ENCODE measurements at regions of chr18 and their contacts with region 1.

Region 1: DNA sequence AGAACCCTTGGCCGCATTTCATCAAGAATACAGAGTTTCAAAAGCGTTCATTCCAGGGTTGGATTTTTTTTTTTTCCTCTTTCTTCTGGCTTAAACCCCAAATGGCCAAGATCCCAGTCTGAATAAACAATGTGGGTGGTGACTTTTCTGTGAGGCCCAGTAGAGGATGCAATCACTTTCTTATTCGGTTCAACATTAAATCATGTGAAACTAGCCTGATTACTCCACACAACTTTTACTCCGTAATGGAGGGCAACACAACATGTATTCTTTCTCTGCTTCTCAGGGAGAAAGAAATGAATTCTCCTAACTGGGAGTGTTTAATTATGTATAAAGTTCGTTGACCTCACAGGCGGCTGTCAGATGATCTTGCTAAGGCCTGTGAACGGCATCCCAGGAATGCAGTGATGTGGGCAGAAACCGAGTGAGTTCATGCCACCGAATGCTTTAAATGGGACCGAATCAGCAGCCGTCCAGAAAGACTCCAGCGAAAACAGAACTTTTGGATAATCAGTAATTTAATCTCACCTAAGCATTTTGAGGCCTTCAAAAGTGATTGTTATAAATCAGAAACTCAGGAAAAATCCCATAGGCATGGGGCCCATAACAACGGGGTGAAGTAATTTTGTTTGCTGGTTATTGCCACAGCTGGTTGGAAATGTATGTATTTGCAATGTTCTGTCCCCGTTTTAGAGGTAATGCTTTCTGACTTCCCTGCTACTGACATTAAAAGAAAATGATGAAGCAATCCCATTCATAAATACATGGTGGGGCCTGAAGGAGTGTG is 81.5 kb downstream of the BCL2 start:
- DNase-seq: no peak
- ATAC-seq: no peak
- H3K4me3 Mint-ChIP-seq: no peak overlapping the region
- H3K27ac Mint-ChIP-seq: peak overlapping the region; percentile 53
- H3K4me1 Mint-ChIP-seq: peaks cover 71% of the 10 kb centered on the region
- H3K27me3 Mint-ChIP-seq: no peaks in the 10 kb centered on the region

Region 2: DNA sequence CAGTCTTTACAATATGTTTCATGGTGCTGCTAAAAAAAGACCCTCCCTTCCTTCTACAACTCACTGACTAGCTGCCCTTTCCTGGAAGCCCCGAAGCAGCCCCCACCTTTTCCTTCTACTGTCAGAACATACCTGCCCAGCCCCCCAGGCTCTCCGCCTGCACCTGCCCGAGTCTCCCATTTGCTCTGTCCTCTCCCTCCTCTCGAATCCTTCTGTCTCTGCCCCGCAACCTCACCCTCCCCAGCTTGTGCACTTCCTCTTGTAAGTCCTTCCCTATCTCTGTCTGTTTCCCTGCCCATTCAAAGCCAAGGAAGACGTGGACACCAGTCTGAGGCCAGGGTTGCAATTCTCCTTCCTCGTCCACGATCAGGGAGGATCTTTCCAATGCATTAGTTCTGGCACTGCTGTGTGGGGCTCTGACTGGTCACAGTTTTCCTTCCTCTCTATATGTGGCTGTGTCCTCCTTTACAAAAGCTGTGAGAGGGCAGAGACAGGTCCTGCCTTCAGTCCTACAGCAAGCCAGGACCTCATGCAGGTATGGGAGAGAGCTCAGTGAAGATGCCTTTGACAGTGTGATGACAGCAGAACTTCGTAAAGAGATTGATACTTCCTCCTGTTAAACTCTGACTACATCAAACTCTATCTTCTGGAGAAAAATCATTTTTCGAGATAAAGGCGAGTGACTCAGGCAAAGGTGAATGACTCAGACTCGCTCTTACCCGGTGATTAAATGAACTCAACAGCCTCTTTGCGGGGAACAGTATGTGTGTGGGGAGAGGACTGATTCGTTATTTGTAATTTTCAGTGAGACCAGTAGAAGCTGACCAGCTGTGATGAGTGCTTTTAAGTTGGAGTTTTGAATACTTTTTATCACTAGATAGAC is 898.7 kb before region 1 on chr18:
- CTCF ChIA-PET with region 1: no interaction called
- POLR2A ChIA-PET with region 1: no interaction called
- intact Hi-C with region 1: no loop called
- DNase-seq: peak; percentile 56
- ATAC-seq: peak; percentile 98
- H3K4me3 Mint-ChIP-seq: peak overlapping the region; percentile 7
- H3K27ac Mint-ChIP-seq: peak overlapping the region; percentile 72
- H3K4me1 Mint-ChIP-seq: peaks cover 24% of the 10 kb centered on the region
- H3K27me3 Mint-ChIP-seq: peaks cover 19% of the 10 kb centered on the region

Region 3: DNA sequence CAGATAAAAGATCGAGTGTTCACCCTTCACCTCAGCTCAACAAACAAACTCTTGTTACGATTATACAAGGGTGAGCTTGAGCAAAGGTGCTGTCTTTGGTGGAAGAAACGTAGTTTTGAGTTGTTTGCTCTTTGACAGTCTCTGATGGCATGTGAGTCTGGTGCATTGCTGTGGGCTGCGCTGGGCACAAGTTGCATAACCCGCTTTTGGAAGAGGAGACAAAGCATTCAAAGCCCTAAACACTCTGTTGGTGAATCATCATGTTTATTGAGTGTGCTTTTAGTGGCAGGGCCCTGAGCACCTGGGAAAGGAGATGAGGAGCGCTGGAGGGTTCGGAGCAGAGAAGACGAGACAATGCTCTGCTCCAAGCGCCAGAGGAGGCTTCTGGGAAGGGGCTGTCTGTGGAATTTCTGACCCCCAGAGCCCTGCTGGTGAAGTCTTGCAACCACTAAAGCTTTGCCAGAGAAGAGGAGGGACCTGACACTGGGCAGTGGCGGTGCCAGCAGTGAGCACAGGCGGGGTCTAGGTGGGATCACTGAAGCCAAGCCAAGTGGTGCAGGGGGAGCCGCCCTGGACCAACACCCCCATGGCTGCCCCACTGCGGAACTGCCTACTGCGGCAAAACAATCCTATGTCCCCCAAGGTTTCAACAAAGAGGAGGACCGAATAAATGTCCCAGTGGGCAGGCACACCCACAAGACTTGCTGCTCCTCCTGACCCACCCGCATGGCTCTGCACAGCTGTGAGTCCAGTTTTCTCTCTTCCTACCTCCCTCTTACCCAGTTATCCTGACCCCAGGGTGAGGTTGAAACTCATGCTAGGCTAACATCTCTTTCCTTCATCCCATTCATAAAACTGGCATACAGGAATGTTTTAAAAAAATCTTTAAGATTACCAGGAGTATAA is 849.0 kb before region 1 on chr18:
- CTCF ChIA-PET with region 1: no interaction called
- POLR2A ChIA-PET with region 1: no interaction called
- intact Hi-C with region 1: no loop called
- DNase-seq: no peak
- ATAC-seq: no peak
- H3K4me3 Mint-ChIP-seq: no peak overlapping the region
- H3K27ac Mint-ChIP-seq: no peak overlapping the region
- H3K4me1 Mint-ChIP-seq: no peaks in the 10 kb centered on the region
- H3K27me3 Mint-ChIP-seq: no peaks in the 10 kb centered on the region

Region 4: GRCh38 chr18:63199743-63200241 is 38.3 kb before region 1 on chr18:
- CTCF ChIA-PET with region 1: no interaction called
- POLR2A ChIA-PET with region 1: no interaction called
- intact Hi-C with region 1: loop called (anchors 1 to 5 kb)
- DNase-seq: peak; percentile 56
- ATAC-seq: peak; percentile 82
- H3K4me3 Mint-ChIP-seq: no peak overlapping the region
- H3K27ac Mint-ChIP-seq: no peak overlapping the region
- H3K4me1 Mint-ChIP-seq: peaks cover 42% of the 10 kb centered on the region
- H3K27me3 Mint-ChIP-seq: no peaks in the 10 kb centered on the region

Measured in activated CD4-positive, alpha-beta T cell treated with anti-CD3 and anti-CD28 coated beads for 36 hours (primary cell).